OCI-LY7 (cell line): ENCODE measurements at regions of chr7 and their contacts with region 1.

Region 1: GRCh38 chr7:86784765-86785164 is 141.1 kb downstream of the GRM3 start:
- DNase-seq: no peak
- H3K4me3 ChIP-seq: no peak overlapping the region
- H3K27ac ChIP-seq: no peak overlapping the region
- H3K4me1 ChIP-seq: no peaks in the 10 kb centered on the region
- CTCF ChIP-seq: no peak

Region 2: DNA sequence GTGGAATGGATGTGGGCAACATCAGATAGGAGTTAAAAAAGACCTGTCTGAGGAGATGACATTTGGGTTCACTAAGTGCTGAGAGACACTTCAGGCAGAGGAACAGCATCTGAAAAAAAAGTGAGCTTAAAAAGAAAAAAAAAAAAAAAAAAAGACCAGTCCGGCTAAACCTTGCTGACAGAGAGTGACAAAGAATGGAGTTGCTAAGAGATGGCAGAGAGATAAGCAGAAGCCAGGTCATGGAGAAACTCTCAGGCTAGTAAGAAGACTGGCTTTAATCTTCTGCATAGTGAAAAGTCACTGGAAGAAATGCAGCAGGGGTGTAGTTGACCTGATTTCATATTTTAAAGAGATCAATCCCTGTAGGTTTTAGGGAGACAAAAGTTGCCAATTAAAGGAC is 886.8 kb before region 1 on chr7:
- CTCF ChIA-PET with region 1: no interaction called
- POLR2A ChIA-PET with region 1: no interaction called
- intact Hi-C with region 1: no loop called
- DNase-seq: no peak
- H3K4me3 ChIP-seq: no peak overlapping the region
- H3K27ac ChIP-seq: no peak overlapping the region
- H3K4me1 ChIP-seq: no peaks in the 10 kb centered on the region
- CTCF ChIP-seq: no peak

Region 3: DNA sequence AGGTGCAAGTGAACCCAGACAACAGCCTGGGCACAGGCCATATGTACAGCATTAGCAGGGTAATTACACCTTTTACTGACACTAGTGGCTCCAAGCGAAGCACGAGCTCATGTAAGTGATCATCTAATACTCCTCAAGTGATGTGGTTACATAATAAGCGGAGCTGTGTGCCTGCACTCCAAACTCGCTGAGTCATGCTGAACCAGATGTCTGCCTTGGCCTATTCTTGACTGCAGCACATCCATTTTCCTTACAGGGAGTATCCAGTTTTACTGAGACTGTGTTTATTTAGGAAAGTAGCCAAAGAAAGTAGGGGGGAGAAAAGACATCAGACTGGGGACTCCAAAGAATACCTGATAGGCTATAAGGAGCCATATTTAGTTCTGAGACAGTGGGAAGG is 51.0 kb before region 1 on chr7:
- CTCF ChIA-PET with region 1: no interaction called
- POLR2A ChIA-PET with region 1: no interaction called
- intact Hi-C with region 1: loop called (anchors 5 kb)
- DNase-seq: peak; percentile 27
- H3K4me3 ChIP-seq: no peak overlapping the region
- H3K27ac ChIP-seq: no peak overlapping the region
- H3K4me1 ChIP-seq: no peaks in the 10 kb centered on the region
- CTCF ChIP-seq: no peak

Region 4: DNA sequence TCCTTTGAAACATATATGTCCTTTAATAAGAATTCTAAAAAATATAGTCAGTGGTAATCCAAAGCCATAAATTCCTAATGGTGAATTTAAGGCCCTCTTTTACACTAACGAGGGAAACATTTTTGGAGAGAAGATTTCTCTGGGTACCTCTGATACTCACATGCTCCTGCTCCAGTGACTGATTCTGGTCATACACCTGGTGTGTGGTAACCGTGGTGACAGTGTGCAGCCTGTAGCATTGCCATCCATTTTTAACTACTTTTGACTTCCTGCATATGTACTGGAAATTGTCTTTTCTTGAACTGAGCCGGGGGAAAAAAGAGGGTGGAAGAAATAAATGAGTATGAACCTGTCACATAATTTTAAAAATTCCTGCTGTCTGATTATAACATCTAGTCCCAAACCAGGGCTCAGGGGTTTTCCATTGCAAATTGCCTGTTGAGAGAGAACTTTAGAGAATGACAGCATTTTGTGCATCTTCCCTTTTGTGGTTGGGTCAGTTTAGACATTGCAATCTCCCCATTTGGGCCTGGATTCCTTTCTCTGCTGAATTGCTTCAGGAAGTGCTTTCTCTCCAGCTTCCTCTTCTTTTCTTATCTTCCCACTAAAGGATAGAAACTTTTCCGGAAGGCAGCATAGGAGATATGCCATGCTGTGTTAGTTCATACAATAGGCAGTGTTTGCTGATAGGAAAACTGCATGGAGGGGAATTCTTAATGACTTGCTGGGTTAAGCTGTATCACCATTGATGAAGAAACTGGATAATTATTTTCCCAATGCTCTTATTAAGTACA is 15.6 kb before region 1 on chr7:
- CTCF ChIA-PET with region 1: no interaction called
- POLR2A ChIA-PET with region 1: no interaction called
- intact Hi-C with region 1: no loop called
- DNase-seq: no peak
- H3K4me3 ChIP-seq: no peak overlapping the region
- H3K27ac ChIP-seq: no peak overlapping the region
- H3K4me1 ChIP-seq: no peaks in the 10 kb centered on the region
- CTCF ChIP-seq: no peak

Region 5: GRCh38 chr7:86833360-86833759 is 48.6 kb after region 1 on chr7:
- CTCF ChIA-PET with region 1: no interaction called
- POLR2A ChIA-PET with region 1: no interaction called
- intact Hi-C with region 1: no loop called
- DNase-seq: no peak
- H3K4me3 ChIP-seq: no peak overlapping the region
- H3K27ac ChIP-seq: no peak overlapping the region
- H3K4me1 ChIP-seq: no peaks in the 10 kb centered on the region
- CTCF ChIP-seq: no peak